ENCODE measurements at regions of chr2 and their contacts with region 1.

Region 1: GRCh38 chr2:9555297-9556141 is at the start of gene ADAM17:
- DNase-seq: peak; percentile 99
- total RNA-seq, gene ADAM17: 18.9 TPM

Region 2: DNA sequence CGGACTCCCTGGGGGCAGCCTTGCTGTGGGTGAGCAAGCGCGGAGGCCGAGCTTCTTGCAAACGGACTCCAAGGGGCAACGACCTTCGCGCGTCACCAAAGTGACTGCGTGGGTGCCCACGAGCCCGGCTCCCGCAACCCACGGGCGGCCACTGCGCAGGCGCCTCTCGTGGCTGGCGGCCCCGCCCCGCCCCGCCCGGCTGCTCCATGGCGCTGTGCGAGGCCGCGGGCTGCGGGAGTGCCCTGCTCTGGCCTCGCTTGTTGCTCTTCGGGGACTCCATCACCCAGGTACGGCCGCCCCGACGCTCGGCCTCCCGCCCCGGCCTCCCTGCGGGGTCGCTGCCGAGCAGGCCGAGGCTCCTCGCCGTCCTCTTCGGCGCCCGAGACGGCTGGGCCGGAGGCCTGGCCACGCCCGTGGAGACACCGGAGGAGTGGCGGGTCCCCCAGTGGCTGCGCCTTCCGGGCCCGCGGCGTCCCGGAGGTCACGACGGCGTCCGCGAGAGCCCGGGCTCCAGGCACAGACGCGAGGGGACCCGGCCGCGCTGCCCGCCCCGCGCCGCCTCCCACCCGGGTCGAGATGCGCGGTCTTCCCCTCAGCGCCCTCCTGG is 81.1 kb before region 1 on chr2 and contains the start of gene IAH1:
- intact Hi-C with region 1: loop called (anchors 5 kb)
- DNase-seq: peak; percentile 88
- total RNA-seq, gene IAH1: 92.0 TPM

Region 3: DNA sequence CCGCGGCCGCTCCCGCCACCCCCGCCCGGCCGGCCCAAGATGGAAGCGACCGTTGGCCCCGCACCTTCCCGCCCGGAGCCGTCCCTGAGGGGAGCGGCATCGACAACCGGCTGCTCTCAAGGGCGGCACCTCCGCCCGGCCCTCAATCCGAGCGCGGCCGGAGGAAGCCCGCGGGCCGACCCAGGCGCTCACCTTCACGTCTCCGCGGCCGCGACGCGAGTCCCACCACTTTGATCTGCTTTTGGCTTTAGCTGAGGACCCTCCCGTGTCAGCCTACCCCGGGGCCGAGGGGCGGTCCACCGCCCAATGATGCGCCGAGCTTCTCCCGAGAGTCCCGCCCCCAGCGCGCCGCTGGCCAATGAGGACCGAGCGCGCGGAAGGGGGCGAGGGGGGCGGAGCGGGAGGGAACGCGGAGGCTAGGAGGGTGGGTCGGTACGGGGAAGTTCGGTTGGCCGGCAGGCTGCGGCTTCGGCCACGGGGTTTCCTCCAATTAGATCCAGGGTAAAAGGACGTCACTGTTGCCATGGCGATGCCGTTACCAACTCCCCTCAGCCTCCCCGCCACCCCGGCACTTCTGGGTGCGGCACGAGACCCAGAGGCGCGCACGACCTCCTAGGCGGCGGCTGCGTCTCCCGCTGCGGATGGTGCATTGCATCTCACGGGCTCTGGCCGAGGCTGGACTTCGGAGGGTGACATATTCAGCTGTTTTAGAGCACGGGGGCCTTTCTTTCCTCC is 75.4 kb after region 1 on chr2 and contains the start of gene YWHAQ:
- intact Hi-C with region 1: loop called (anchors 1 kb)
- DNase-seq: peak; percentile 98
- total RNA-seq, gene YWHAQ: 299 TPM

Region 4: DNA sequence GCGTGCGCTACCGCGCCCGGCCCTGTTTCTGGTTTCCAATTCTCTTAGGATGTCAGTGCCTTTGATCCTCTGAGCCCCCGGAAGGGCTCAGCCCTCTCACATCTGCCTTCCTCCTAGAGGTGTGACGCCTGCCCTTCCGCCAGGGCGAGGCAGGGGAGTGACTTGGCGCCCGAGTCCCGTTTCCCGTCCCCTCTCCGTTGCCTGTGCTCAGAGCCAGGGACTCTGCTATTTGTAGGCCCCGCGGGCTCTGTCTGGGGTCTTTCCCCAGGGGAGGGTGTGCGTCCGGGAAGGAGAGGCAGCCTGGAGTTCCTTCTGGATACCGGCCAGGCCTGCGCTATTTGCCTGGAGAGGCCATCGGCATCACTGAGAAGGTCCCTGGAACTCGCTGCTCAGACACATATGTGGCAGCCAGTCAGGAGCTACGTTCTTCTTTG is 184.0 kb after region 1 on chr2:
- intact Hi-C with region 1: loop called (anchors 1 kb)
- DNase-seq: peak; percentile 89

Region 5: GRCh38 chr2:10043906-10044601 is 488.5 kb after region 1 on chr2:
- intact Hi-C with region 1: loop called (anchors 5 kb)
- DNase-seq: peak; percentile 98

Measured in cardiac septum (tissue), 1 donor.